Panc1 (cell line): ENCODE measurements at regions of chr12 and their contacts with region 1.

Region 1: GRCh38 chr12:40819436-40820108 is 127.3 kb downstream of the CNTN1 start:
- DNase-seq: no peak
- ATAC-seq: no peak
- H3K4me3 ChIP-seq: no peak overlapping the region
- H3K27ac ChIP-seq: no peak overlapping the region
- H3K4me1 ChIP-seq: no peaks in the 10 kb centered on the region
- H3K27me3 ChIP-seq: no peaks in the 10 kb centered on the region
- CTCF ChIP-seq: no peak

Region 2: DNA sequence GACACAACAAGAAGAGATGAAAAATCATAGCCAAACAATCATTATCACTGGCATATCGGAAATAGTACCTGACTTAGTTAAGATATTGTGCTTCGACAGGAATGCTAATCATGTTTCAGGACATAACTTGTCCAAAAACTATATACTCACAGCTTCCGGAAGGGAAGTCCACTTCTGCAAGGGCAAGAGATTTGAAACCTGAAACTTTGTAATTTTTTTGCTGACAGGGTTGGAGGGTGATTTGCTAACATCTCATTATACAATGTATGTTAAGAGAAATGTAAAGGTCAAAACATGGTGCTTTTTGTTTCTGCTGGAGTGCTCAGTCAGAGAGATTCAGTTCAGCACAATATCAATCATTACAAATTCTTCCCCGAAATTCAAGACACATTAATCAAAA is 73.0 kb after region 1 on chr12:
- CTCF ChIA-PET with region 1: no interaction called
- POLR2A ChIA-PET with region 1: interaction called, 24 read pairs
- in situ Hi-C with region 1: no loop called
- intact Hi-C with region 1: no loop called
- DNase-seq: no peak
- ATAC-seq: no peak
- H3K4me3 ChIP-seq: no peak overlapping the region
- H3K27ac ChIP-seq: no peak overlapping the region
- H3K4me1 ChIP-seq: no peaks in the 10 kb centered on the region
- H3K27me3 ChIP-seq: no peaks in the 10 kb centered on the region
- CTCF ChIP-seq: no peak

Region 3: DNA sequence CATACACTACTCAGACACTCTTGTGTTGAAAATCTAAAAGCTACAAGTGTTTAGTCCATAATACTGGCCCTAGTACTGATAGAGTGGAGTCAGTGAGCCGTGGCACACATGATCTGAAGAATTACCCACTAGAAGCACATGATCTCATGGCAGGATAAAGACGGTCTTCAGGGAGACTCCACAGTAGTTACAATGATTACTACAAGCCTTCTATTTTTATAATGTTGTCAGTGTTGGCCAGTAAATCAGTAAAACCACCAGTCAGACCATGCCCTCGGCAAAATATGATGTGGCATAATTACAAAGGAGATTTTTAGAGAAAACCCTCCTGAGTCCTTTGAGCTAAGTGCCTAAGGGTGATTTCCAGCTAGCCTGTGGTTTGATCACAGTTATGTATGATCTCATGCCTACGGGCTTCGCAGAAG is 483.4 kb after region 1 on chr12:
- CTCF ChIA-PET with region 1: interaction called, 11 read pairs
- POLR2A ChIA-PET with region 1: no interaction called
- in situ Hi-C with region 1: no loop called
- intact Hi-C with region 1: no loop called
- DNase-seq: no peak
- ATAC-seq: no peak
- H3K4me3 ChIP-seq: no peak overlapping the region
- H3K27ac ChIP-seq: no peak overlapping the region
- H3K4me1 ChIP-seq: no peaks in the 10 kb centered on the region
- H3K27me3 ChIP-seq: no peaks in the 10 kb centered on the region
- CTCF ChIP-seq: no peak